CD4-positive, alpha-beta T cell (primary cell): ENCODE measurements at regions of chr6 and their contacts with region 1.

Region 1: DNA sequence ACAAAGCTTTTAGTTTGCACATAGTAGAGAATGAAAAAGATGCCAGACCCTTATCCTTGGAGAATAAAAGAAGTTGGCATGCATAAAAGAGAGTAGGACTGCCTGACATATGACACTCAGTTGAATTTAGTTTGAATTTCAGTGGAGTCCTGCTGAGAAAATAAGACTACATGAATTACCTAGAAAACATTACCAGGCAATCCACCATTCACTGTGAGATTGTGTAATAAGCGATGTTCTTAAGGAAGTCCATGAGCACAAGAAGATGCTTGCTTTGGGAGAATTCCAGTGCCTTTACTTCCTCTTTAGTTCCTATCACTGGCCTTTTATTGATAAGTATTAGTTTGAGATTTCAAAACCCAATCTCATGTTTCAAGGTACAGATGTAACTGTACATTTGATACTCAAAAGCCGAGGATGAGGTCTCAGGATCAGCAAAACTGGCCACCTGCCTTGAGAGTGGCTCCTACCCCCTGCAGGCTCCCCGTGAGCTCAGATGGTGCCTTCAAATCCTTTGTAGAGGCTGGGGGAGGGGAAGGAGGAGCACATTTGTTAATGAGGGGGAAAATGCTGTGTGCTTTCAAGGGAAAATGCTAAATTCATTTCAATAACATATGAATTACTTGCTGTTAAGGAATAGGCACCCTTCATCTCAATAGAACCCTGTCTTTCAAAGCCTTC is 11.2 kb upstream of the UNC93A start:
- DNase-seq: no peak
- ATAC-seq: no peak
- H3K4me3 ChIP-seq: no peak overlapping the region
- H3K4me3 Mint-ChIP-seq: no peak overlapping the region
- H3K27ac ChIP-seq: no peak overlapping the region
- H3K27ac Mint-ChIP-seq: no peak overlapping the region
- H3K4me1 ChIP-seq: no peaks in the 10 kb centered on the region
- H3K4me1 Mint-ChIP-seq: no peaks in the 10 kb centered on the region
- H3K27me3 ChIP-seq: peaks cover 0 to 3% of the 10 kb centered on the region in 2 experiments
- H3K27me3 Mint-ChIP-seq: peaks cover 10% of the 10 kb centered on the region
- CTCF ChIP-seq: no peak

Region 2: GRCh38 chr6:167219967-167220512 is 59.9 kb before region 1 on chr6:
- CTCF ChIA-PET with region 1: no interaction called
- POLR2A ChIA-PET with region 1: no interaction called
- intact Hi-C with region 1: loop called in 1 of 2 experiments (anchors 2 kb)
- DNase-seq: no peak
- ATAC-seq: no peak
- H3K4me3 ChIP-seq: no peak overlapping the region
- H3K4me3 Mint-ChIP-seq: no peak overlapping the region
- H3K27ac ChIP-seq: no peak overlapping the region
- H3K27ac Mint-ChIP-seq: no peak overlapping the region
- H3K4me1 ChIP-seq: no peaks in the 10 kb centered on the region
- H3K4me1 Mint-ChIP-seq: peaks cover 4% of the 10 kb centered on the region
- H3K27me3 ChIP-seq: peaks cover 0 to under 1% of the 10 kb centered on the region in 2 experiments
- H3K27me3 Mint-ChIP-seq: no peaks in the 10 kb centered on the region
- CTCF ChIP-seq: no peak